ENCODE measurements at regions of chr3 and their contacts with region 1.

Region 1: GRCh38 chr3:77825001-77825827 is 785.3 kb downstream of the ROBO2 start:
- DNase-seq: peak; percentile 54
- H3K4me3 ChIP-seq: no peak overlapping the region
- H3K27ac ChIP-seq: no peak overlapping the region
- H3K4me1 ChIP-seq: no peaks in the 10 kb centered on the region
- H3K27me3 ChIP-seq: no peaks in the 10 kb centered on the region
- CTCF ChIP-seq: no peak
- POLR2A ChIP-seq: no peak

Region 2: GRCh38 chr3:77667901-77668300 is 157.3 kb before region 1 on chr3:
- CTCF ChIA-PET with region 1: no interaction called
- POLR2A ChIA-PET with region 1: no interaction called
- dilution Hi-C with region 1: no loop called
- intact Hi-C with region 1: loop called (anchors 2 kb)
- DNase-seq: peak; percentile 35
- H3K4me3 ChIP-seq: no peak overlapping the region
- H3K27ac ChIP-seq: peak overlapping the region; percentile 39
- H3K4me1 ChIP-seq: peaks cover 14% of the 10 kb centered on the region
- H3K27me3 ChIP-seq: no peaks in the 10 kb centered on the region
- CTCF ChIP-seq: no peak
- POLR2A ChIP-seq: no peak

Region 3: DNA sequence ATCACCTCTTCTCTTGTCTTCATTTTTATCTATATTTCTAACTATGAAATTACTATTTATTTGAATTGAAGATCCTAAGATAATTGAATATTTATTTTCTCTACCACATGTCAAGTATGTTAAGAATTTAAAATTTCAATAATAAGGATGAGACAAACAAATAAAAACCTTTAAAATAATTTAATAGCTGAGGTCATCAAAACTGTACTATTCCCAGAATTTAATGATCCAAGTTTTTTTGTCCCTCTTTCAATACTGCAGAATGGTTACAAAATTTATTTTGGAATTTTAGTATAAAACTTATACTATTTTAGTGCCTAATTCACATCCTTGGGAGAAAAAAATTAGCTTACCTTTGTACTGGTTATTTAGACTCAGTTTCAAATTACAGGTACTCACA is 10.4 kb before region 1 on chr3:
- CTCF ChIA-PET with region 1: no interaction called
- POLR2A ChIA-PET with region 1: no interaction called
- dilution Hi-C with region 1: no loop called
- intact Hi-C with region 1: no loop called
- DNase-seq: no peak
- H3K4me3 ChIP-seq: no peak overlapping the region
- H3K27ac ChIP-seq: no peak overlapping the region
- H3K4me1 ChIP-seq: peaks cover 7% of the 10 kb centered on the region
- H3K27me3 ChIP-seq: no peaks in the 10 kb centered on the region
- CTCF ChIP-seq: no peak
- POLR2A ChIP-seq: no peak

Measured in endothelial cell of umbilical vein (primary cell).